PC-9 (cell line): ENCODE measurements at regions of chr5 and their contacts with region 1.

Region 1: GRCh38 chr5:93359296-93359958 is 221.6 kb downstream of the NR2F1-AS1 start:
- DNase-seq: peak; percentile 61 to 72
- H3K4me3 ChIP-seq: peak overlapping the region; percentile 10; the same call in 1 of the 2 replicates
- H3K27ac ChIP-seq: peak overlapping the region; percentile 66
- H3K4me1 ChIP-seq: peaks cover 17% of the 10 kb centered on the region
- H3K27me3 ChIP-seq: no peaks in the 10 kb centered on the region
- CTCF ChIP-seq: no peak

Region 2: GRCh38 chr5:93092349-93093105 is 266.9 kb before region 1 on chr5:
- CTCF ChIA-PET with region 1: no interaction called
- POLR2A ChIA-PET with region 1: no interaction called
- intact Hi-C with region 1: loop called (anchors 5 kb)
- DNase-seq: no peak
- H3K4me3 ChIP-seq: no peak overlapping the region
- H3K27ac ChIP-seq: no peak overlapping the region
- H3K4me1 ChIP-seq: peaks cover 7% of the 10 kb centered on the region; the same call in 1 of the 2 replicates
- H3K27me3 ChIP-seq: no peaks in the 10 kb centered on the region
- CTCF ChIP-seq: peak; percentile 48; the same call in 1 of the 2 replicates

Region 3: GRCh38 chr5:93620487-93621326 is 261.3 kb after region 1 on chr5:
- CTCF ChIA-PET with region 1: no interaction called
- POLR2A ChIA-PET with region 1: no interaction called
- intact Hi-C with region 1: no loop called
- DNase-seq: peak; percentile 55 to 58
- H3K4me3 ChIP-seq: peak overlapping the region; percentile 90
- H3K27ac ChIP-seq: peak overlapping the region; percentile 57; the same call in 1 of the 2 replicates
- H3K4me1 ChIP-seq: peaks cover 13% of the 10 kb centered on the region
- H3K27me3 ChIP-seq: no peaks in the 10 kb centered on the region
- CTCF ChIP-seq: no peak